ENCODE measurements at regions of chr17 and their contacts with region 1.

Region 1: DNA sequence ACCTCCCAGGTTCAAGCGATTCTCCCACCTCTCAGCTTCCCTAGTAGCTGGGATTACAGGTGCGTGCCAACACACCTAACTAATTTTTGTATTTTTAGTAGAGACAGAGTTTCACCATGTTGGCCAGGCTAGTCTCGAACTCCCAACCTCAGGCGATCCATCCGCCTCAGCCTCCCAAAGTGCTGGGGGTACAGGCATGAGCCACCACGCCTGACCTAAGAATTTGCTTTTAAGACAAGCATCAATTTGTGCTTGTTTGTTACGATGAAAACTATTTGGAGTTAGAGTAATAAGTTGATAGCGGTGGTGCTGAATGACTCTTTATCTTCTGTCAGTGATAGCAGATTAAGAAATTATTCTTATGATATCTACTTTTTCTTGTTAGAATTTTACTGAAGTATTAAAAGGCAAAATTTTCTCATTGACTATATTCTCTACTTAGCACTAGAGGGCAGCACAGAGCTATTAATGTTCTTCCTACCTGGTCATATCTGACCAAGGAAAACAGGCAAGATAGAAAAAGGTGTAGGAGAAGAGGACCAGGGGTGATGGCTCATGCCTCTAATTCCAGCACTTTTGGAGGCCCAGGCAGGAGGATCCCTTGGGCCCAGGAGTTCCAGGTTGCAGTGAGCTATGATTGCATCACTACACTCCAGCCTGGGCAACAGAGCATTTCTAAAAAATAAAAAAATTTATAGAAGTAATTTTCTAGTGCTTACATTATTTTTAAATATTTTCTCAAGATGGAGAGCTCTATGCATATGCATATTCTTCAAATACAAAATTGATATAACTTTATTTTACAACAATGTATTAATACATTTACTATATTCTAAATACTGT is 24.5 kb downstream of the STXBP4 start:
- DNase-seq: peak; percentile 45
- H3K27ac ChIP-seq: no peak overlapping the region
- CTCF ChIP-seq: peak; percentile 76

Region 2: DNA sequence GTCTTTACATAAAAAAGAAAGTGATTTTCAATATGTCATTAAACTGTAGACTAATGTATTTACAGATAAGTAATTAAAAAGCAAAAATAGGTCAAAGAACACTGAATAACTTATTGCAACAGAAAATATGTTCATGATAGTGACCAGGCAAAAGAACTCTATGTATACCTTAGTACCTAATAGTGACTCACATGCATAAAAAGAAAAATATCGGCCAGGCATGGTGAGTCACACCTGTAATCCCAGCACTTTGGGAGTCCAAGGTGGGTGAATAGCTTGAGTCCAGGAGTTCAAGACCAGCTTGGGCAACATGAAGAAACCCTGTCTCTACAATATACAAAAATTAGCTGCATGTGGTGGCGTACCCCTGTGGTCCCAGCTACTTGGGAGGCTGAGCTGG is 125.4 kb before region 1 on chr17:
- CTCF ChIA-PET with region 1: no interaction called
- POLR2A ChIA-PET with region 1: no interaction called
- DNase-seq: no peak
- H3K27ac ChIP-seq: no peak overlapping the region
- CTCF ChIP-seq: no peak

Region 3: GRCh38 chr17:55348749-55349354 is 355.8 kb after region 1 on chr17:
- CTCF ChIA-PET with region 1: interaction called, 18 read pairs
- POLR2A ChIA-PET with region 1: no interaction called
- DNase-seq: peak; percentile 44
- H3K27ac ChIP-seq: no peak overlapping the region
- CTCF ChIP-seq: peak; percentile 96